CD14-positive monocyte (primary cell): ENCODE measurements at regions of chr17 and their contacts with region 1.

Region 1: DNA sequence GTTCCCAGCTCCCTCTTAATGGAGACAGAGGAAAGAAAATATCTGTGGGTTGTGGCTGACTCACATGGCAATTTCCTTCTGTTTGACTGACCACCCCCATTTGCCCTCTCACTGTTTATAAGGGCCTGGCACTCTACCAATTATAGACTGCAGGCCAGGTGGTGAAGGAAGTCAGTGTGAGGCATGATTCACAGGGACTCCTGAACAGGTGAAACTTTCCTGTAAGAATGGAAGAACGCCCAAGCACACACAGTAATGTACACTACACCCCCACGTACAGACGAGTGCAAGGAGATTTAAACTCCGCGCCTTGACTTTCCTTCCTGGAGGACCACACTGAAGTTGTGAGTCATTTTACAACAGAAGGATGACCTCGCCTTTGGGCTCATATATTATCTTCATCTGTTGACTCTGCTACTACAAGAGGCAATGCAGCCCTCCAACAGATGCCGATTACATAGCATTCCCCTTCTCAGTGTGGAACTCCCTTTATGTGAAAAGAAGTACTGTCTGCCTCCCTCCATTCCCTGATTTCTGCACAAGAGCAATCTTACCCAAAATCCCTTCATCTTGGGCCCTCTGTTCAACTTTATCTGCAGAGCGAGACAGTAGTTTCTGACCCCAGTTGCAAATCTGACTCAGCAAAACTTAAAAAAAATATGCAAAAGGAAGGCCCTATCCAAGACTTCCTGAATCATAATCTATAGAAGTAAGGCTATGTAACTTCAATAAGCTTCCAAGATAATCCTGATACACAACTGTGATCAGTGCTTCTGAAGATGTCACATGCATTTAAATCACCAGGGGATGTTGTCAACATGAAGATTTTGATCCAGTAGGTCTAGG is 163.6 kb downstream of the SHISA6 start:
- DNase-seq: no peak
- H3K4me3 ChIP-seq: no peak overlapping the region
- H3K4me3 Mint-ChIP-seq: no peak overlapping the region
- H3K27ac ChIP-seq: no peak overlapping the region
- H3K27ac Mint-ChIP-seq: no peak overlapping the region
- H3K4me1 ChIP-seq: no peaks in the 10 kb centered on the region
- H3K4me1 Mint-ChIP-seq: no peaks in the 10 kb centered on the region
- H3K27me3 ChIP-seq: no peaks in the 10 kb centered on the region
- H3K27me3 Mint-ChIP-seq: no peaks in the 10 kb centered on the region
- CTCF ChIP-seq: no peak

Region 2: DNA sequence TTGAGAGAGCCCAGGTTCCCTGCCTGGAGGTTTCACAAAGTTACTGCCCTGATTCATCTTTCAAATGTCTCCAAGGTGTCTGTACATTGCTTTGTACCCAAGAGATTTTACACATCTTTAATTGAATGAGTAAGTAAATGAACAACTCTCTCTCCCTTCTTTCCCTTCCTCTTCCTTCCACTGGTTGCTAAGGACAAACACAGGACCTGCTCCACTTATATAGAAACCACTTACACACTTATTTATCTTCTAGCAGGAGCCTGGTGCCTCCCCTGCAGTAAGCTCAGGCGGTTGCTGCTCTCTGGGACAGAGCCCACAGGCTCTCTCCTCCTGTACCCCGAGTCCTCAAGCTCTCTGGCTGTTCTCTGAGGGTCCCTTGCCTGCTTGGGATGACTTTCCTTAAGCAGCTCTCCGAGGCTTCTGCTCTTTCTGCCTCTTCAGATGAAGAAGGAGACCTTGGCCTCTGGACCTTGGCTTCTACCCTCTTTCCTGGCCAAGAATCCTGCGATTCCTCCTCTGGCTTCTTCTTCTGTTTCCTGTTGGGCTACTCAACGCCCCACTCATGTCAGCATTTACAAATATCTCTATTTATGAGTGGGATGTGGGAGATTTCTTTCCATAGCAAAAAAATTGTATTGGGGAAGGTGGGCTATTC is 576.6 kb before region 1 on chr17:
- intact Hi-C with region 1: no loop called
- DNase-seq: no peak
- H3K4me3 ChIP-seq: no peak overlapping the region
- H3K4me3 Mint-ChIP-seq: no peak overlapping the region
- H3K27ac ChIP-seq: no peak overlapping the region
- H3K27ac Mint-ChIP-seq: peak overlapping the region in 1 of 7 donors; percentile 43
- H3K4me1 ChIP-seq: no peaks in the 10 kb centered on the region
- H3K4me1 Mint-ChIP-seq: no peaks in the 10 kb centered on the region
- H3K27me3 ChIP-seq: no peaks in the 10 kb centered on the region
- H3K27me3 Mint-ChIP-seq: peaks cover 1 to 5% (median 2%) of the 10 kb centered on the region in 3 donors
- CTCF ChIP-seq: no peak

Region 3: GRCh38 chr17:10976401-10976800 is 428.3 kb before region 1 on chr17:
- intact Hi-C with region 1: no loop called
- DNase-seq: no peak
- H3K4me3 ChIP-seq: no peak overlapping the region
- H3K4me3 Mint-ChIP-seq: no peak overlapping the region
- H3K27ac ChIP-seq: no peak overlapping the region
- H3K27ac Mint-ChIP-seq: no peak overlapping the region
- H3K4me1 ChIP-seq: no peaks in the 10 kb centered on the region
- H3K4me1 Mint-ChIP-seq: no peaks in the 10 kb centered on the region
- H3K27me3 ChIP-seq: no peaks in the 10 kb centered on the region
- H3K27me3 Mint-ChIP-seq: peaks cover 0 to 3% (median 2%) of the 10 kb centered on the region in 3 donors
- CTCF ChIP-seq: no peak

Region 4: GRCh38 chr17:11459861-11460331 is 55.2 kb after region 1 on chr17:
- intact Hi-C with region 1: loop called in 1 of 2 experiments (anchors 5 kb)
- DNase-seq: no peak
- H3K4me3 ChIP-seq: no peak overlapping the region
- H3K4me3 Mint-ChIP-seq: no peak overlapping the region
- H3K27ac ChIP-seq: no peak overlapping the region
- H3K27ac Mint-ChIP-seq: no peak overlapping the region
- H3K4me1 ChIP-seq: no peaks in the 10 kb centered on the region
- H3K4me1 Mint-ChIP-seq: no peaks in the 10 kb centered on the region
- H3K27me3 ChIP-seq: no peaks in the 10 kb centered on the region
- H3K27me3 Mint-ChIP-seq: peaks cover 0 to 4% (median 0%) of the 10 kb centered on the region in 3 donors
- CTCF ChIP-seq: no peak